ENCODE measurements at regions of chr10 and their contacts with region 1.

Region 1: DNA sequence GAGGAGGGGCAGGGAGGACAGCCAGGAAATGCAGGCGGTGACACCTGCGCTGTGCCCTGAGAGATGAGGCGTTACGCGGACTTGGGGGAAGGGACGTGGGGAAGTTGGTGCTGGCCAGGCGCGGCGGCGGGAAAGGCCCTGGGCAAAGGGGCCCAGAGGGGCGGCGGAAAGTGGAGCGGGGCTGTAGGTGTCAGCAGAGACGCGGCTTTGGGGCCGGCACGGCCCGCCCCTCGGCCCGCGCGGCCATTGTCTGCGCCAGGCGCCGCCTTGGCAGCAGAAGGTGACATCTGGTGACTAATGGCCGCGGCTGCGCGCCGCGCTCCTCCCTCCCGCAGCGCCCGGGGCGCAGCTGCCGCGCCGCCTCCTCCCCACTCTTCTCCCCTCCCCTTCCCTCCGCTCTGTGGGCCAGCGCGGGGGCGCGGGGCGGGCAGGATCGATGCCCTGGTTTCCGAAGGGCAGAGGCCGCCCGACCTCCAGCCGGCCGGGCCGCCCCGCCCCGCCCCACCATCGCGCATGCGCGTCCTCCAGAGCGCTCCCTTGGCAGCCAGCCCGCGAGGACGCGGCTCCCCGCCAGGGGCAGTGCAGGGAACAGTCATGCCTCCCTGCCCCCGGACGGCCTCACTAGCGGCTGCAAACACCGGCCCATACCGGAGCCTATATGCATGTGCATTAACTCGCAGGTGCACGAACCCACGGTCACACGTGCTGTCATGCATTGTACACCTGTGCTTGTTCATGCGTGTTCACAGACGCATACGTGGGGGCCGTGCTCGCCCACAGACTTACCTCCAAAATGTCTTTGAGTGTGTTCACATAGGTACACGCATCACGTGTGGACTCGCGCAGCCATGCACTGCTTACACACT is 269.6 kb downstream of the RPS24 start:
- DNase-seq: peak; percentile 94 to 98
- H3K4me3 ChIP-seq: peak overlapping the region; percentile 69
- H3K4me3 Mint-ChIP-seq: peak overlapping the region; percentile 95
- H3K27ac Mint-ChIP-seq: peak overlapping the region; percentile 95
- H3K4me1 ChIP-seq: peaks cover 17% of the 10 kb centered on the region
- H3K4me1 Mint-ChIP-seq: peaks cover 13% of the 10 kb centered on the region
- H3K27me3 ChIP-seq: no peaks in the 10 kb centered on the region
- H3K27me3 Mint-ChIP-seq: peaks cover 15% of the 10 kb centered on the region
- CTCF ChIP-seq: peak; percentile 70 to 85

Region 2: DNA sequence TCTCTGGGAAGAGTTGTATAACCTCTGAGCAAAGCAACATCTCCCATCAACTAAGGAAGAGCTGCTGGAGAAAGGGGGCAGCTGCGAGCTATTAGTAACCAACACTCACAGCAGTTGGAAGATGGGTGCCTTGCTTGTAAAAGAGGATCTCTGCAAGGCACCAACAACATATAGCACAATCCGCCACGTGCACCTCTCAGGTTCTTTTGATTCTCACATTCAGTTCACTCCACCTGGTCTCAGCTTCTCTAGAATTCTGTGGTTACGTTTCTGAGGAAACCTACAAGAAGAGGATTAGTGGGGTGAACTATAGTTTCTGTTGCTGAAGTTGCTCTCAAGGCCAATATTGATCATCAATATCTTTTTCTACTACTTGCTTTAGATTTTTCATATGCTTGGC is 152.5 kb before region 1 on chr10:
- CTCF ChIA-PET with region 1: no interaction called
- POLR2A ChIA-PET with region 1: no interaction called
- intact Hi-C with region 1: loop called (anchors 5 kb)
- DNase-seq: no peak
- H3K4me3 ChIP-seq: no peak overlapping the region
- H3K4me3 Mint-ChIP-seq: no peak overlapping the region
- H3K27ac Mint-ChIP-seq: no peak overlapping the region
- H3K4me1 ChIP-seq: peaks cover 24% of the 10 kb centered on the region
- H3K4me1 Mint-ChIP-seq: peaks cover 13% of the 10 kb centered on the region
- H3K27me3 ChIP-seq: no peaks in the 10 kb centered on the region
- H3K27me3 Mint-ChIP-seq: peaks cover 2% of the 10 kb centered on the region
- CTCF ChIP-seq: no peak

Region 3: GRCh38 chr10:78231939-78232338 is 71.3 kb before region 1 on chr10:
- CTCF ChIA-PET with region 1: interaction called, 8 read pairs
- POLR2A ChIA-PET with region 1: interaction called, 4 read pairs
- intact Hi-C with region 1: loop called (anchors 1 kb)
- DNase-seq: peak in 1 of 2 experiments; percentile 31
- H3K4me3 ChIP-seq: no peak overlapping the region
- H3K4me3 Mint-ChIP-seq: no peak overlapping the region
- H3K27ac Mint-ChIP-seq: no peak overlapping the region
- H3K4me1 ChIP-seq: no peaks in the 10 kb centered on the region
- H3K4me1 Mint-ChIP-seq: no peaks in the 10 kb centered on the region
- H3K27me3 ChIP-seq: no peaks in the 10 kb centered on the region
- H3K27me3 Mint-ChIP-seq: peaks cover 6% of the 10 kb centered on the region
- CTCF ChIP-seq: peak in 1 of 2 experiments; percentile 24

Region 4: DNA sequence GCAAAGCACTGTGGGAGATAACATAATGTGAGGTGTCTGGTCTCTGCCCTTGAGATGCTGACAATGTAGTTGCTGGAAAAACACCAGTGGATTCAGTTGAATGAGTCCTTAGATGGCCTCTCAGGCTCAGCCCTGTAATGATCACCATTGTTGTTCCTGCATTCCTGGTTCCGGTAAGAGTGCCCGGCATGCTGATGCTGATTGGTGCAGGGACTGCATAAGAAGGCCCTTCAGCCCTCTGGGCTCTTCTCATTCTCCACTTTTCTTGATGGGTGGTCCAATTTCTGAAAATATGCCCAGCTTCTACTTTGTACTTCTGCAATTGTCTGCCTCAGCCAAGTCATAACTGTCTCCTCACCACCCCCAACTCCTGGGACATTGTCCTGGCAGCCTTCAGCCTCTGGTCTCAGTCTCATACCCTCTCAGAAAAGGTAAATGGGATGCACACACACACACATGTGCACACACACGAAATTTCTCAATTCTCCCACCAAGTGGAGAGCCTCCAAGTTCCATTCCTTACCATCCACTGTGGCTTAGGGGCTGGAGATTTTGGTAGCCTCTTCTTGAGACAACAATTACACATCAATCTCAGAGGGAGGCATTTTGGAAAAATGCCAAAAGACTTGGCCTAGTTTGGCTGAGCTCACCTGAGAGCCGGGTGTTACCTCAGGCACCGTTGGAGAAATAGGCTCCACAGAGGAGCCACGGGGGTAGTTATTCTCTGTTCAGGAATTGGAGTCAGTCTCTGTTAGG is 45.4 kb after region 1 on chr10:
- CTCF ChIA-PET with region 1: no interaction called
- POLR2A ChIA-PET with region 1: no interaction called
- intact Hi-C with region 1: no loop called
- DNase-seq: peak in 1 of 2 experiments; percentile 2
- H3K4me3 ChIP-seq: no peak overlapping the region
- H3K4me3 Mint-ChIP-seq: no peak overlapping the region
- H3K27ac Mint-ChIP-seq: no peak overlapping the region
- H3K4me1 ChIP-seq: no peaks in the 10 kb centered on the region
- H3K4me1 Mint-ChIP-seq: no peaks in the 10 kb centered on the region
- H3K27me3 ChIP-seq: peaks cover 2% of the 10 kb centered on the region
- H3K27me3 Mint-ChIP-seq: peaks cover 10% of the 10 kb centered on the region
- CTCF ChIP-seq: no peak

Region 5: GRCh38 chr10:78520737-78521430 is 217.7 kb after region 1 on chr10:
- CTCF ChIA-PET with region 1: no interaction called
- POLR2A ChIA-PET with region 1: no interaction called
- intact Hi-C with region 1: loop called (anchors 5 kb)
- DNase-seq: peak; percentile 68 to 71
- H3K4me3 ChIP-seq: no peak overlapping the region
- H3K4me3 Mint-ChIP-seq: no peak overlapping the region
- H3K27ac Mint-ChIP-seq: no peak overlapping the region
- H3K4me1 ChIP-seq: peaks cover 4% of the 10 kb centered on the region; the same call in 1 of the 2 replicates
- H3K4me1 Mint-ChIP-seq: peaks cover 15% of the 10 kb centered on the region
- H3K27me3 ChIP-seq: no peaks in the 10 kb centered on the region
- H3K27me3 Mint-ChIP-seq: no peaks in the 10 kb centered on the region
- CTCF ChIP-seq: peak; percentile 37 to 58

Region 6: GRCh38 chr10:78972947-78973900 is 670.0 kb after region 1 on chr10:
- CTCF ChIA-PET with region 1: no interaction called
- POLR2A ChIA-PET with region 1: no interaction called
- intact Hi-C with region 1: loop called (anchors 5 kb)
- DNase-seq: peak; percentile 83 to 86
- H3K4me3 ChIP-seq: peak overlapping the region; percentile 44
- H3K4me3 Mint-ChIP-seq: peak overlapping the region; percentile 84
- H3K27ac Mint-ChIP-seq: peak overlapping the region; percentile 89
- H3K4me1 ChIP-seq: peaks cover 23% of the 10 kb centered on the region
- H3K4me1 Mint-ChIP-seq: peaks cover 16% of the 10 kb centered on the region
- H3K27me3 ChIP-seq: no peaks in the 10 kb centered on the region
- H3K27me3 Mint-ChIP-seq: no peaks in the 10 kb centered on the region
- CTCF ChIP-seq: no peak

Measured in Caco-2 (cell line).